GM10248 (cell line): ENCODE measurements at regions of chr7 and their contacts with region 1.

Region 1: DNA sequence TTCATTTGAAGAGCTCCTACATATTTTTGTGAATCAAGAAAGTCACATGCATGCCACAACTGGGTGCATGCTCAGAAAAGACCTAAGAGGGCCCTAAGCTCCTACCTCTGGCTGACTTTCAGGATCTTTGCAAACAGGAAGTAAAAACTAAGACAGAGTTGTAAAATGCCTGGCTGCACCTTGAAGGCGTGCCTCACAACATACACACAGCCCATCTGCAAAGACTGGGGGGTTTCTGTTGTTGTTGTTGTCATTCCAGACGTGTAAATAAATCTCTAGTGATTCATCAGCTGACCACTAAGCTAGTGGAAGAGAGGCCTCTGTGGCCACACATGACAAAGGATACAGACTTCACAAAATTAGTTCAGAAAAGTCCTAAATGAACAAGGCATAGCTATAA is 31.8 kb downstream of the SMURF1 start:
- DNase-seq: peak; percentile 31
- CTCF ChIP-seq: no peak

Region 2: GRCh38 chr7:98949336-98950044 is 162.6 kb before region 1 on chr7:
- CTCF ChIA-PET with region 1: no interaction called
- POLR2A ChIA-PET with region 1: no interaction called
- DNase-seq: no peak
- CTCF ChIP-seq: no peak

Region 3: DNA sequence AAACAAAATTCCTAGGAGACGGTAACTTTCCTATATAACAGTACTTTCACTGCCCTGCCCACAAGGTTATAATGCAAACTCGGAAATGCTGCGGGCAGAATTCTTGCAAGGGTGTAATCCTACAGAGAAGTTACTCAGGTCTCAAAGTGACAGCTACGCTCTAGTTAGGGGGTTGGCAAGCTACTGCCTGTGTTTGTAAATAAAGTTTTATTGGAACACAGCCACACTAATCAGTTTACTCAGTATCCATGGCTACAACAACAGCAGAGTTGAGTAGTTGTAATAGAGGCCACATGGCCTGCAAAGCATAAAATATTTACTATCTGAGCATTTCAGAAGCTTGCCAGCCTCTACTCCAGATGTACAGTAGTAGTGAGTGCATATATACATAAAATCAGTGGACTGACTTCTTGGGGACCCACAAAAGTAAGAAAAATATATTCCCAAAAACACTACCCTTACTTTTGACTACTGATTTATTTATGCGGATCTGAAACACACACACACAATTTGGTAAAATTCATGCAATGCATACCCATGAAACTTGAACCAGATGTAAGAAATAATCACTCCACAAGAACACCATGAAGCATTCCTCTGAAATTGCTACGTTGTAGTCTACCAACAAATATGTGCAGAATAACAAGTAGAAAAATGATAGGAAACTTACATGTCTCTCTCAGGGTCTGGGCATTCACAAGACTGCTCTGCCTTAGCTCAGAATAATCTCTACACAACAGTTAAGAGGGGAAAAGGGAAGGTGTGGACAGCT is 21.1 kb before region 1 on chr7:
- CTCF ChIA-PET with region 1: no interaction called
- POLR2A ChIA-PET with region 1: no interaction called
- DNase-seq: no peak
- CTCF ChIP-seq: no peak

Region 4: GRCh38 chr7:99142727-99143520 is 30.8 kb after region 1 on chr7:
- CTCF ChIA-PET with region 1: interaction called, 3 read pairs
- POLR2A ChIA-PET with region 1: interaction called, 10 read pairs
- DNase-seq: peak; percentile 88
- CTCF ChIP-seq: no peak

Region 5: DNA sequence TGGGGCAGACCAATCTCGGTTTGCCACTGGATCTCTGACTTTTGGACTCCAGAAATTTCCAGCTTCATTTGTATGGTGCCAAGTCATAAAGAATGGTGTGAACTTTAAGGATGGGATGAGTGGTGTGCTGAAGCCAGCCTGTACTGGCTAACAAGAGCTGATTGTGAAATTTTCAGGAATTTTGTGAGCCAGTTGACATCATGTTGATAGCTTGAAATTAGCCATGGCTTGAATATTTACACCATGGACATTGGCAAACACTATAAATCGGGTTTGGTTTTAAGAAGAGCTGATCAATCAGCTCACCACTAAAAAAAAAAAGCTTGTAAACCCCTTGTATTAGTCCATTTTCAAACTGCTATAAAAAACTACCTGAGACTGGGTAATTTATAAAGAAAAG is 146.4 kb after region 1 on chr7:
- CTCF ChIA-PET with region 1: no interaction called
- POLR2A ChIA-PET with region 1: no interaction called
- DNase-seq: no peak
- CTCF ChIP-seq: no peak